Activated CD8-positive, alpha-beta T cell treated with anti-CD3 and anti-CD28 coated beads for 36 hours (primary cell): ENCODE measurements at regions of chr7 and their contacts with region 1.

Region 1: GRCh38 chr7:143240291-143241168 is 18.7 kb downstream of the TAS2R40 start:
- DNase-seq: peak; percentile 84
- ATAC-seq: peak; percentile 82
- H3K4me3 Mint-ChIP-seq: peak overlapping the region; percentile 16
- H3K27ac Mint-ChIP-seq: peak overlapping the region; percentile 49
- H3K4me1 Mint-ChIP-seq: peaks cover 33% of the 10 kb centered on the region
- H3K27me3 Mint-ChIP-seq: no peaks in the 10 kb centered on the region
- CTCF ChIP-seq: peak; percentile 95

Region 2: DNA sequence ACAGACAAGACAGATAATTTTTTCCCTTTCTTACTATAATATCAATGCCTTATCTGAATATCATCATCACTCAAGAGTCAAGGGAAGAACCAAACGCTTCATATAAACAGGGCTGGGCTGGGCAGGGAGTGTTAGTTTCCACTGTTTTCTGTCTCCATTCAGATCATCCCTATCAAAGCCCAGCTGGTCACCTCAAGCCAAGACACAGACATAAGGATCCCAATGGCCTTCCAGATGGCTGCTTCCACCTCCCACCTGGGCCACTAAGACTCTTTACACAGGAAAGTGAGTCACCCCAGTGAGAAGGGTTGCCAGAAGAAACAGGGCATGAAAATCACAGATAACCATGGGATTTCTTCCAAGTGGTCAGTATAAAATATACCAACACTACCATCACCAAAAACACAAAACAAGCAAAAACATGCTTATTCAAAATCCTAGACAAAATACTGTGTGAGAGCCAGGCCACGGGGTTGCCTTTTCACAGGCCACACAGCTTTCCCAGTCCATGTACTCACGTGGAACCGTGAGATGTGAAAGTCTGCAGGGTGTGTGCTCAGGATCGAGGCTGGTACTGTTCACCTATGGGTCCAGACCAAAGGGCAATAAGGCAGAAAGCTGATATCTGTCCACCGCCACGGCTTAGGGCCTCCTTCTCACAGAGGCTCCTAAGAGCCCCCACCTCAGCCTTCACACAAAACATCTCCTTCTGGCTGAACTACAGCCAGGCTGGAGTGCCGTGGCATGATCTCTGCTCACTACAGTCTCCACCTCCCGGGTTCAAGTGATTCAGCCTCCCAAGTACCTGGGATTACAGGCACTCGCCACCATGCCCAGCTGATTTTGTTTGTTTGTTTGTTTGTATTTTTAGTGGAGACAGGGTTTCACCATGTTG is 485.6 kb before region 1 on chr7:
- CTCF ChIA-PET with region 1: no interaction called
- POLR2A ChIA-PET with region 1: no interaction called
- intact Hi-C with region 1: no loop called
- DNase-seq: no peak
- ATAC-seq: no peak
- H3K4me3 Mint-ChIP-seq: no peak overlapping the region
- H3K27ac Mint-ChIP-seq: no peak overlapping the region
- H3K4me1 Mint-ChIP-seq: no peaks in the 10 kb centered on the region
- H3K27me3 Mint-ChIP-seq: no peaks in the 10 kb centered on the region
- CTCF ChIP-seq: no peak

Region 3: GRCh38 chr7:143214789-143215679 is 25.5 kb before region 1 on chr7:
- CTCF ChIA-PET with region 1: interaction called, 24 read pairs
- POLR2A ChIA-PET with region 1: no interaction called
- intact Hi-C with region 1: no loop called
- DNase-seq: peak; percentile 69
- ATAC-seq: peak; percentile 98
- H3K4me3 Mint-ChIP-seq: no peak overlapping the region
- H3K27ac Mint-ChIP-seq: no peak overlapping the region
- H3K4me1 Mint-ChIP-seq: no peaks in the 10 kb centered on the region
- H3K27me3 Mint-ChIP-seq: no peaks in the 10 kb centered on the region
- CTCF ChIP-seq: peak; percentile 100

Region 4: GRCh38 chr7:143256325-143256724 is 15.8 kb after region 1 on chr7:
- CTCF ChIA-PET with region 1: interaction called, 48 read pairs
- POLR2A ChIA-PET with region 1: interaction called, 3 read pairs
- intact Hi-C with region 1: no loop called
- DNase-seq: no peak
- ATAC-seq: peak; percentile 38
- H3K4me3 Mint-ChIP-seq: no peak overlapping the region
- H3K27ac Mint-ChIP-seq: peak overlapping the region; percentile 72
- H3K4me1 Mint-ChIP-seq: peaks cover 56% of the 10 kb centered on the region
- H3K27me3 Mint-ChIP-seq: no peaks in the 10 kb centered on the region
- CTCF ChIP-seq: peak; percentile 16

Region 5: DNA sequence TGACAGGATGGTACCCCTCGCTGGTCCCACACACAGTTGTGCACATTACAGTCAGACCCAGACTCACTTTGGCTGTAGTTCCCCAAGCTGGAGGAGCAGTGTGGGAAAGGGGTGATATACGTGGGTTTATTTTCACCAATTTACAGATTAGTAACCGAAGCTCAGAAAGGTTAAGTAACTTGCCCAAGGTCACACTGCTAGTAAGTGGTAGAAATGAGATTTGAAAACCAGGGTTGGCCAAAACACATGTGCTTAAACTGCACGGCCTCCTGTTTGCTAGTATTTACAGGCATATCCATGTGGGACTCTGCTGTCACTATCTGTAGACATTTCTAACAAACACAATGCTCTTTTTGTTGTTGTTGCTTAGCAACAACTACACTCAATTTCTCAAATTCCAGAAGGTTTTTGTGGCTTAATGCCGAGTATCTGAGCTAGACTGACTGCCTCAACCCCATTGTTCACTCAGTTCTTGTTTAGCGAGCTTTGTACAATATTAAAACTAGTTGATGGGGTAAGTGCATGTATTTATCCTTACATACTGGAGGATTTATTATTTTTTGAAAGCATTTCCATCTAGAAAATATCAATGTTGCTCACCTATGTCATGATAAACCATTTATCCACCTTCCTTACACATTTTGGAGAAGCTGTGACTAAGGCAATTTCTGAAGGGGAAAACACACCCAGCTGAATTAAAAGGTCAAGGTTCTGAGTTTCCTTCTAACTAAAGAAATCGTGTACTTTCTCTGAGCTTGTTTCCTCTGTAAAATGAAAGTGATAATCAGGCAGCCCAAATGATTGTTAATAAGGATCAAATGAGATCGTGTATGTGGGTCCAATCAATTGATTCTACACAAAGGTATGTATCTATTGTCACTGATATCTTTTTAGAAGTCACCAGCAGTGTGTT is 38.9 kb after region 1 on chr7:
- CTCF ChIA-PET with region 1: interaction called, 36 read pairs
- POLR2A ChIA-PET with region 1: no interaction called
- intact Hi-C with region 1: loop called (anchors 5 kb)
- DNase-seq: no peak
- ATAC-seq: peak; percentile 79
- H3K4me3 Mint-ChIP-seq: peak overlapping the region; percentile 80
- H3K27ac Mint-ChIP-seq: peak overlapping the region; percentile 96
- H3K4me1 Mint-ChIP-seq: peaks cover 40% of the 10 kb centered on the region
- H3K27me3 Mint-ChIP-seq: no peaks in the 10 kb centered on the region
- CTCF ChIP-seq: no peak

Region 6: DNA sequence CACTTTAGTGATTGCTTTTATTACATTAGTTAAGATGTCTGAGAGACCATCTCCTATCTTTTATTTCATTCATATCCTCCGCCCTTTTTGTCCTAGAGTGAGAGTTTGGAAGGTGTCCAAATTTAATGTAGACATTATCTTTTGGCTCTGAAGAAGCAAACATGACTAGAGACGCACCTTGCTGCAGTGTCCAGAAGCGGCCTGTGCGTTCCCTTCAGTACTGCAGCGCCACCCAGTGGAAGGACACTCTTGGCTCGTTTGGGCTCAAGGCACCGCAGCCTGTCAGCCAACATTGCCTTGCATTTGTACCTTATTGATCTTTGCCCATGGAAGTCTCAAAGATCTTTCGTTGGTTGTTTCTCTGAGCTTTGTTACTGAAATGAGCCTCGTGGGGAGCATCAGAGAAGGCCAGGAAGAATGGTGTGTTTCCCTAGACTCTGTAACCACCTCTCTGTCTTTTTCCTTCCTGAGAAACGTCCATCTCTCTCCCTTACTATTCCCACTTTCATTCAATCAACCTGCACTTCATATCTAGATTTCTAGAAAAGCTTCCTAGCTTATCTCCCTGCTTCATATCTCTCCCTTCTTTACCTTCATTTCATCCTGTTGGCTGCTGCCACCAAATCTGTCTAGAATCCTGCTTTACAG is 65.0 kb after region 1 on chr7:
- CTCF ChIA-PET with region 1: interaction called, 211 read pairs
- POLR2A ChIA-PET with region 1: interaction called, 7 read pairs
- intact Hi-C with region 1: loop called (anchors 1 kb)
- DNase-seq: peak; percentile 86
- ATAC-seq: peak; percentile 86
- H3K4me3 Mint-ChIP-seq: no peak overlapping the region
- H3K27ac Mint-ChIP-seq: peak overlapping the region; percentile 58
- H3K4me1 Mint-ChIP-seq: peaks cover 46% of the 10 kb centered on the region
- H3K27me3 Mint-ChIP-seq: no peaks in the 10 kb centered on the region
- CTCF ChIP-seq: peak; percentile 82

Region 7: GRCh38 chr7:143372070-143372469 is 131.5 kb after region 1 on chr7:
- CTCF ChIA-PET with region 1: interaction called, 20 read pairs
- POLR2A ChIA-PET with region 1: no interaction called
- intact Hi-C with region 1: no loop called
- DNase-seq: peak; percentile 82
- ATAC-seq: peak; percentile 60
- H3K4me3 Mint-ChIP-seq: no peak overlapping the region
- H3K27ac Mint-ChIP-seq: peak overlapping the region; percentile 79
- H3K4me1 Mint-ChIP-seq: peaks cover 55% of the 10 kb centered on the region
- H3K27me3 Mint-ChIP-seq: no peaks in the 10 kb centered on the region
- CTCF ChIP-seq: no peak

Region 8: DNA sequence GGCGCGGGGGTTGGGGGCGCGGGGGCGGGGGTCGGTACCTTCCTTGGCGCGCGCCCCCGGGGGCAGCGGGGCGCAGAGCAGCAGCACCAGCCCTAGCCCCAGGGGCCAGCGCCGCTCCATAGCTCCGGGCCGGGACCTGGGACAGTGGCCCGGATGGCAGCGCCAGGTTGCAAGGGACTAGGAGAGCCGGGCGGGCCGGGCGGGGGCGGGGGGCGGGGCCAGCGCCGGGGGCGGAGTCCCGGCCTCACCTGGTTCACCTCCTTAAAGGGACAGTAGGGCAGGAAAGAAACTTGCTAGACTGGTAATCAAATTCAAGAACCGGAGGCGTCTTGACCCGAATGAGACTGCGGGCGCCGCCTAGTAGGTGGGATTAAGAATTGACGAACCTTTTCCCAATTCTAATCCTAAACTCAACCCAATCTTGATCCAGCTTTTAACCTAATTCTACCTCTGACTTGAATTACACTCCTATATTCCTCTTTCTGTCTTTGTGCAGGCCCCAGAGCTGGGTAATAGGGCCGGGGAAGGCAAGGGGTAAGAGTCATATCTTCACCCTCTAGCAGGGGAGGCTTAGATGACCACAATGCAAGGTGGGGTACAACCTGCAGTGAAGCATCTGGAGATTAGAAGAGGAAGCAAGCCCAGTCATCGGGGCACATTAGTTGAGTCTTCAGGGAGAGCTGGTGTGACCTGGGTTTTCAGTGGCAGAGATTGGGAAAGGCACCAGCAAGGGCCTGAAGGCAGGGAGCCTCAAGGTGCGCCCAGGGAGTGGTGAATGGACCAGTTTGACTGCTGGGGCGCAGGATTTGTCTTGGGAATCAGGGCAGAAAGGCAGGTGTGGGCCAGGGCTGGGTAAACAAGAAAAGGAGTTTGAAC is 168.4 kb after region 1 on chr7 and contains the start of gene EPHA1:
- CTCF ChIA-PET with region 1: interaction called, 22 read pairs
- POLR2A ChIA-PET with region 1: no interaction called
- intact Hi-C with region 1: no loop called
- DNase-seq: peak; percentile 42
- ATAC-seq: peak; percentile 61
- H3K4me3 Mint-ChIP-seq: peak within 1 kb of the TSS; percentile 74
- H3K27ac Mint-ChIP-seq: peak within 1 kb of the TSS; percentile 63
- H3K4me1 Mint-ChIP-seq: peaks cover 52% of the 10 kb centered on the region
- H3K27me3 Mint-ChIP-seq: no peaks in the 10 kb centered on the region
- CTCF ChIP-seq: peak; percentile 39
- total RNA-seq, gene EPHA1: 2.4 to 2.8 TPM